ENCODE measurements at regions of chr1 and their contacts with region 1.

Region 1: GRCh38 chr1:204503122-204503912 is 8.7 kb upstream of the PIK3C2B start:
- DNase-seq: no peak
- H3K4me3 ChIP-seq: no peak overlapping the region
- H3K27ac ChIP-seq: no peak overlapping the region
- H3K4me1 ChIP-seq: peaks cover 2% of the 10 kb centered on the region
- H3K27me3 ChIP-seq: no peaks in the 10 kb centered on the region
- CTCF ChIP-seq: peak; percentile 55 to 76 (median 75)
- EP300 ChIP-seq: no peak
- POLR2A ChIP-seq: no peak

Region 2: DNA sequence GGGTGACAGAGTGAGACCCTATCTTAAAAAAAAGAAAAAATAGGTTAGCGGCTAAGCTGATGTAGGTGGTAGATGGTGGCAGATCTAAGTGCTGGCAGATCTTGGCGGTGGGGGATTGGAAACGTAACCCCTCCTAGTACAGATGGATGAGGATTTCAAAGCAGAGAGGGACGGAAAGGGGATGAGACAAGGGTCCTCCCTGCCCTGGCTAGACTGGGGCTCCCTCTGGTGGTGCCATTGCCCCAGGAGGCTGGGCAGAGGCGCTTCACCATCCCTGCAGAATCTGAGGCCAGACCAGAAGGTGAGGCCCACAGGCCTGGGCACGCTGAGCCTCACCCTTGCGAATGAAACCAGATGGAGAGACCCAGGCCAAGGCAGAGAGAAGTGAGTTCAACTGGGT is 136.6 kb before region 1 on chr1:
- intact Hi-C with region 1: no loop called
- DNase-seq: no peak
- H3K4me3 ChIP-seq: no peak overlapping the region
- H3K27ac ChIP-seq: no peak overlapping the region
- H3K4me1 ChIP-seq: peaks cover 2% of the 10 kb centered on the region
- H3K27me3 ChIP-seq: no peaks in the 10 kb centered on the region
- CTCF ChIP-seq: no peak
- EP300 ChIP-seq: no peak
- POLR2A ChIP-seq: no peak

Region 3: DNA sequence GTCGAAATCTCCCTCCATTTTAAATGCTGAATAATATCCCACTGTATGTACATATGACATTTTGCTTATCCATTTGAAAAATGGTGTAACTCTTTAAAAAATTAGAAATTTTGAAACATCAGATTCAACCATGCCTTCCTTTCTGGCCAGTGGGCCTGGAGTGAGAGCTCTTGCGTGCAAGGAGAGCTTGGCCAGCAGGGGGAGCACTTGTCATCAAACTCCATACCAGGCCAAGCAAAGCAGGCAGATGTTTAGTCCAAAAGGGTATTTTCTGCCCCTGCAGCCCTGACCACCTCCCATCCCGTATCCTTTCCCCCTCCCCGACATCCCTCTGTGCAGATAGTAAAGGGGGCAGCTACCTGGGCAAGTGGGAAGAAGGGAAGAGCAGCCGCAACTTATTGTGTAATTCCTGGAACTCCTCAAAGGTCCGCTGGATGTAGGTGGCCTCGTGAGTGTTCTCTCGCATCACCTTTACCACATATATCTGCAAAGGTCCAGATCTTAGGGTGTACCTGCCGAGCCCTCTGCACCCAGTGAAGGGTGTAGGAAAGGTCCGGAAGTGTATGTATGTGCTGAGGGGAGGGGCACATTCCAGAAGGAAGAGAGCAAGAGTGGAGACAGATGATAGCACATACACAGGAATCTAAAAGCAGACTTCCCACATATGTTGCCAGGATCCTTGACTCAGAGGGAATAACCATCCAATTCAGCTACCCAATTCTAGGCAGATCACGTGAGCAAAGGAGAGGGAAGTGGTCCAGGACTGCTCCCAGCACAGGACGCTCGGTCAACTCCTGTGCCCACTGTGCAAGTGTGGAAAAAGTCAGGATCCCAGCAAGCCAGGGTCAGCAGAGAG is 71.8 kb before region 1 on chr1:
- intact Hi-C with region 1: loop called in 3 of 4 experiments (anchors 2 kb)
- DNase-seq: peak; percentile 73 to 88 (median 85)
- H3K4me3 ChIP-seq: no peak overlapping the region
- H3K27ac ChIP-seq: no peak overlapping the region
- H3K4me1 ChIP-seq: no peaks in the 10 kb centered on the region
- H3K27me3 ChIP-seq: no peaks in the 10 kb centered on the region
- CTCF ChIP-seq: peak; percentile 48 to 85 (median 78)
- EP300 ChIP-seq: no peak
- POLR2A ChIP-seq: no peak

Region 4: DNA sequence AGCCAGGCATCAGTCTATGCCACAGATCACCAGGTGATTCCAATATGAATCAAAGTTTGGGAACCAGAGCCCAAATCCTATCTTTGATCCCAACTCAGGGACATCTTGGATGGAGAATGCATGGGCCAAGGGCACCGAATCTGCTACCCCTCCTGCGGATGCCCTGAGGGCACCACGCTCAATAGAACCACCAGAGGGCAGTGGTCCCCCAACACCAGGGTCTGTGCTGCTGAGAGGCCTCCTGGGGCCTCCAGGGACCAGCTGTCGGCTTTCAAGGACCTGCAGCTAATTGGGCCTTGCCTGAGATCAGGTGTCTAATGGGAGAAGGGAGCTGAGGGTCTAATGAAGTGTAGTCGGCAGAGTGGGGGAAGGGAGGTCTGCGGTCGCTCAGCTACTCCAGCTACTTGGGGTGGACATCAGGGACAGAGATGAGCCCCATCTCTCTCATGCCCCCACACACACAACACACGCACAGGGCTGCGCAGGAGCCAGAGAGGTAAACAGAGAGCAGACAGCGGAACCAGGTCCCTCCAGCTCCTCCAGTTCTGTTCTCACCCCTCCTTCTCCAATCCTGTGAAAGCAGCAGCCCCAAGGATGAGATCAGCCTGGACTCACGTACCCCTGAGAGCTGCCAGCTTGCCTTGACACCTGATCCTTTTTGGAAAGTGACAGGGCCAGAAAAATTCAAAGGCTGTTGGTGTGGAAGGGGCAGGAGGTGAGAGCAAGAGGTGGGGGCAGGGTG is 56.8 kb before region 1 on chr1:
- intact Hi-C with region 1: loop called in 3 of 4 experiments (anchors 5 kb)
- DNase-seq: peak; percentile 46 to 69 (median 65)
- H3K4me3 ChIP-seq: no peak overlapping the region
- H3K27ac ChIP-seq: no peak overlapping the region
- H3K4me1 ChIP-seq: no peaks in the 10 kb centered on the region
- H3K27me3 ChIP-seq: no peaks in the 10 kb centered on the region
- CTCF ChIP-seq: peak in 2 of 3 donors; percentile 43 to 68
- EP300 ChIP-seq: no peak
- POLR2A ChIP-seq: no peak